CD4-positive, alpha-beta T cell (primary cell): ENCODE measurements at regions of chr9 and their contacts with region 1.

Region 1: GRCh38 chr9:21559424-21560280 is 77.5 kb upstream of the IFNE start:
- DNase-seq: peak; percentile 20 to 80 (median 41)
- ATAC-seq: peak; percentile 80
- H3K4me3 ChIP-seq: peak overlapping the region; percentile 61
- H3K4me3 Mint-ChIP-seq: peak overlapping the region; percentile 98
- H3K27ac ChIP-seq: no peak overlapping the region
- H3K27ac Mint-ChIP-seq: peak overlapping the region; percentile 68
- H3K4me1 ChIP-seq: peaks cover 16% of the 10 kb centered on the region
- H3K4me1 Mint-ChIP-seq: peaks cover 32% of the 10 kb centered on the region
- H3K27me3 ChIP-seq: peaks cover 7 to 45% of the 10 kb centered on the region in 2 experiments
- H3K27me3 Mint-ChIP-seq: peaks cover 46% of the 10 kb centered on the region
- CTCF ChIP-seq: no peak

Region 2: GRCh38 chr9:21491742-21492141 is 67.9 kb before region 1 on chr9:
- CTCF ChIA-PET with region 1: no interaction called
- POLR2A ChIA-PET with region 1: no interaction called
- intact Hi-C with region 1: loop called in 1 of 2 experiments (anchors 10 kb)
- DNase-seq: peak in 3 of 14 experiments; percentile 12 to 18 (median 15)
- ATAC-seq: no peak
- H3K4me3 ChIP-seq: no peak overlapping the region
- H3K4me3 Mint-ChIP-seq: no peak overlapping the region
- H3K27ac ChIP-seq: no peak overlapping the region
- H3K27ac Mint-ChIP-seq: no peak overlapping the region
- H3K4me1 ChIP-seq: no peaks in the 10 kb centered on the region
- H3K4me1 Mint-ChIP-seq: no peaks in the 10 kb centered on the region
- H3K27me3 ChIP-seq: no peaks in the 10 kb centered on the region
- H3K27me3 Mint-ChIP-seq: no peaks in the 10 kb centered on the region
- CTCF ChIP-seq: no peak

Region 3: GRCh38 chr9:21570643-21571275 is 11.1 kb after region 1 on chr9:
- CTCF ChIA-PET with region 1: interaction called, 6 read pairs
- POLR2A ChIA-PET with region 1: interaction called, 9 read pairs
- intact Hi-C with region 1: loop called in 1 of 2 experiments (anchors 2 kb)
- DNase-seq: no peak
- ATAC-seq: no peak
- H3K4me3 ChIP-seq: no peak overlapping the region
- H3K4me3 Mint-ChIP-seq: no peak overlapping the region
- H3K27ac ChIP-seq: no peak overlapping the region
- H3K27ac Mint-ChIP-seq: no peak overlapping the region
- H3K4me1 ChIP-seq: no peaks in the 10 kb centered on the region
- H3K4me1 Mint-ChIP-seq: peaks cover 1% of the 10 kb centered on the region
- H3K27me3 ChIP-seq: no peaks in the 10 kb centered on the region
- H3K27me3 Mint-ChIP-seq: peaks cover 7% of the 10 kb centered on the region
- CTCF ChIP-seq: no peak

Region 4: GRCh38 chr9:21579209-21579608 is 19.6 kb after region 1 on chr9:
- CTCF ChIA-PET with region 1: interaction called, 6 read pairs
- POLR2A ChIA-PET with region 1: interaction called, 19 read pairs
- intact Hi-C with region 1: loop called (anchors 2 kb)
- DNase-seq: peak in 5 of 14 experiments; percentile 13 to 77 (median 44)
- ATAC-seq: peak; percentile 77
- H3K4me3 ChIP-seq: peak overlapping the region; percentile 29
- H3K4me3 Mint-ChIP-seq: peak overlapping the region; percentile 85
- H3K27ac ChIP-seq: no peak overlapping the region
- H3K27ac Mint-ChIP-seq: peak overlapping the region; percentile 90
- H3K4me1 ChIP-seq: peaks cover 13% of the 10 kb centered on the region
- H3K4me1 Mint-ChIP-seq: peaks cover 45% of the 10 kb centered on the region
- H3K27me3 ChIP-seq: no peaks in the 10 kb centered on the region
- H3K27me3 Mint-ChIP-seq: no peaks in the 10 kb centered on the region
- CTCF ChIP-seq: no peak

Region 5: DNA sequence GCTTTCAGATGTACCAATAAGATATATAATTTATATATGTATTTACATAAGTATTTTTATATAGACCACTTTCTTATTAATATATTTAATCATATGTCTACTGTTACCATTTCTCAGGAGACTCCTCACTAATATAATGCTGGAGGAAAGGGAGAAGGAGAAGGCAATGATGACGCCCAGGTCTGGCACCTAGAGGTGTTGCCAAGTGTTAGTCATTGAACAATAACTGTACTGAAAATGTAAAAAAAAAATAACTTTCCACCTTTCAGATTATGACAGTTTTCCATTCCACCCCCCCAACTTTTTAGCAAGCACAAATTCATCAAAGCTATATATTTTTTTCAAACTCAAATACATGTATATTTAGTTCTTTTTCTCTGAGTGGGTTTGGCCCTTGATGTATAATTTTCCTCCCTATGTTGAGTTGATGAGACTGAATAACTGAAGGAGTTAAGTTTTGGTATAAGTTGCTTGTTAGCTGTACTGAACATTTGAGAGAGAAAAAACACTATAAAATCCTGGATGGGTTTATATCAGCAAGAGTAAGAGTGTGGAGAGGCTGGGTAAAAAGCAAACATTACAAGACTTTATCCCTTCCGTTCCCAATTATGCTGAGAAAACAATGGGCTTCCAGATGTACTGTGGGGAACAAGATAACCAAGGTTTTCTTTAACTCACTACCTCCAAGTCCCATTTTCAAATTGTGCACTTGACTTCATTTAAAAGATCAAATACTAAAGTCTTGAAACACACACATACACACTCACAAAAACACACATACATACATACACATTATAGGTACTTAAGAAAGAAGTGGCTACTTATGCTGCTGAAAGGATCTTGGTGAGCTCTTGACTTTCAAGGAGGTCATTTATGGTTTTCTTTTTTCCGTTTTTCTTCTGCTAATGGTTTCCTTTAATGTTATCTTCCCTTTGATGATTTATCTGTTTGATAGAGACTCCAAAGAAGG is 65.3 kb after region 1 on chr9:
- CTCF ChIA-PET with region 1: no interaction called
- POLR2A ChIA-PET with region 1: no interaction called
- intact Hi-C with region 1: loop called in 1 of 2 experiments (anchors 5 kb)
- DNase-seq: no peak
- ATAC-seq: no peak
- H3K4me3 ChIP-seq: no peak overlapping the region
- H3K4me3 Mint-ChIP-seq: no peak overlapping the region
- H3K27ac ChIP-seq: no peak overlapping the region
- H3K27ac Mint-ChIP-seq: no peak overlapping the region
- H3K4me1 ChIP-seq: no peaks in the 10 kb centered on the region
- H3K4me1 Mint-ChIP-seq: peaks cover 20% of the 10 kb centered on the region
- H3K27me3 ChIP-seq: no peaks in the 10 kb centered on the region
- H3K27me3 Mint-ChIP-seq: no peaks in the 10 kb centered on the region
- CTCF ChIP-seq: no peak